Head of caudate nucleus (tissue), 42 donors: ENCODE measurements at regions of chr4 and their contacts with region 1.

Region 1: DNA sequence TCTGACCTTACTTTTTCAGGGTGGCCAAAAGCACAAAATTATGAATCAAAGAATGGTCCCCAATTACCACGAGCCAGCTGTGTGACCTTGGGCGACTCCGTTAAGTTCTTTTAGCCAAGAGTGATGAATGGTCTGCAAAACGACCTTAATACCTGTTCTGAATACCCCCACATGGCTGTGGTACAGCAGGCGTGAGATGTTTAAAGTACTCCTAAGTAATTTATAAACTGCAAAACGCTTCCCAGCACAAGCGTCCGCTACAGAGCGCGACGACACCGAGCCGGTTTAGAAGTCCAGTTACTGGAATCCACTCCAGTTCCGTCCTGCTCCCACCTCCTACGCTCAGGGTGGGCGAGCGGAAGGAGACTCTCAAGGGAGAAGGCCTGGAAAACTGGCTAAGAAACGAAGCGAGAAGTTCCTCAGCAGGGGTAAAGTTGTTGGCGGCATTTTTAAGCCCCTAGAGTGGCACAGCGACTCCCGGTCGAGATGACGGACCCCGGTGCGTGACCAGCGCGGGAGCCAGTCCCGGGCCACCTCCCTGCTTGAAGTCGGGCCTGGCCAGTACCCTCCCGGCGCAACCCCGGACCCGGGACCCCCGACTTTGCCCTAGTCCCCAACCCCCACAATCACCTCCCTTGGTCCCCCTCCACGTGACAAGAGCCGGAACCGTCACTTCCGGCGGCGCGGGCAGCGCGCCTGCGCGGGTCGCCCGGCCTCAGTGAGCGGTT is 683 bp upstream of the BMP2K start:
- DNase-seq: peak; percentile 69 to 95 (median 89)

Region 2: DNA sequence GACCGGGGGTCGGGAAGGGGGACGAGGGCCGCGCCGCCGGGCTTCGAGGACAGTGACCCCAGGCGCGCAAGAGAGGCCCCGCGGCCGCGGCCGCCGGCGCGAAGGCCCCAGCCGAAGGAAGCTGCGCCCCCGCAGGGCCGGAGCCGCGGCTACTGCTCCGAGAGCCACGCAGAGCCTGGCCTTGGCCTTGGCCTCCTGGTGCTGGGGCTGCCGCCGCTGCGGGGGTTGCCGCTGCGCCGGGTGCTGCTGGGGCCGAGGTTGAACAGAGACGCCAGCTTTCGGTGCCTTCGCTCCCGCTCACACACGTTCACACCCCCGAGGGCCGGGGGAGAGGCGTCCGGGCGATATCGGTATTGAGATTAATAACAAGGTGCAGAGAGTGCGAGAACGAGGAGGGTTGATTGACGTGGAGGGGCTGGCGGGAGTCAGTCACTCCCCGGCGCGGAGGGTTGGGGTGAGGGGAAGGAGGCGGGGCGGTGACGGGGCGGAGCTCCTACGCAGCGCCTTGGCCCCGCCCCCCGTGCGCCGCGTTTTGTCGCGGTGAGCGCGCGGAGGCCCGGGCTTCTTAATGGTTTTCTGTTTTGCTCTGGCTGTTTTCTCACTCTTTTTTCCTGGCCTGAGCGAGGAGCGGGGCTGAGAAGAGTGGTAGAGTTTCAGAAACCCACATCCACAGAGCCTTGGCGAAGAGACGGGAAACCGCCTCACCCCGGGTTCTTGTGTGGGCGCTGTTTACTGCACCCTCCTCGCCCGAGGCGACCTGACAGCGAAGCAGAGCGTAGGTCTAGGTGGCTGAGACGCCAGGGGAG is 955.4 kb before region 1 on chr4:
- intact Hi-C with region 1: loop called (anchors 10 kb)
- DNase-seq: peak; percentile 86 to 99 (median 96)

Region 3: GRCh38 chr4:78644744-78645330 is 130.6 kb before region 1 on chr4:
- intact Hi-C with region 1: loop called (anchors 2 kb)
- DNase-seq: peak in 39 of 42 donors; percentile 15 to 78 (median 56)

Region 4: DNA sequence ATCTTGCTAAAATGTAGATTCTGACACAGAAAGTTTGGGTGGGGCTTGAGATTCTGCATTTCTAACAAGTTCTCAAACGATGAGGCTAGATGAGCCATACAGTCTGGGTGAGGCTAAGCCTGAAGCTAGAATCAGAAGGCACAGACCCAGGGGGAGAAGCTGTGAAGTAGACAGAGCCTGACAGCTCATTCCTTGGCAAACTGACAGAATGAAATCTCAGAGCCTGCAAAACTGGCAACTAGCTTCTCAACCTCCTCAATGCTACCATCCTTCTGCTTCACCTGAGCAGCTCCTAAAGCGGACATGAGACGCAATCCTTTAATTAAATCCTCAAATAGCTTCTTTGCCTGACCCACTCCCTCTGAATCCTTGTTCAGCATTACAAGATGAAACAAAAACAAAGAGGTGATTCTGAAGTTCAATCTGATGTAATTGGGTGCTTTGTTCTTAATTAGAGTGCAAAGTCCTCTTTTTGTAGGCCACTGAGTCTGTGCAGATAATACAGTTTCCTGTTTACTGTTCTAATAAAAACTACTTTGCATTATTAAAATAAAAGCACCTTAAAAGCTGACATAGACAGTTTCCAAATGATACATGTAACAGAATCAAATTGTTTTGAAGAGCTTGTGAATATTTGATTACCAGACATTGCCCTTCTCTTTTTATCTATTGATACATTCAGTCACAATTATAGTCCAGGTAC is 70.3 kb before region 1 on chr4:
- intact Hi-C with region 1: loop called (anchors 10 kb)
- DNase-seq: peak in 12 of 42 donors; percentile 8 to 62 (median 30)

Region 5: DNA sequence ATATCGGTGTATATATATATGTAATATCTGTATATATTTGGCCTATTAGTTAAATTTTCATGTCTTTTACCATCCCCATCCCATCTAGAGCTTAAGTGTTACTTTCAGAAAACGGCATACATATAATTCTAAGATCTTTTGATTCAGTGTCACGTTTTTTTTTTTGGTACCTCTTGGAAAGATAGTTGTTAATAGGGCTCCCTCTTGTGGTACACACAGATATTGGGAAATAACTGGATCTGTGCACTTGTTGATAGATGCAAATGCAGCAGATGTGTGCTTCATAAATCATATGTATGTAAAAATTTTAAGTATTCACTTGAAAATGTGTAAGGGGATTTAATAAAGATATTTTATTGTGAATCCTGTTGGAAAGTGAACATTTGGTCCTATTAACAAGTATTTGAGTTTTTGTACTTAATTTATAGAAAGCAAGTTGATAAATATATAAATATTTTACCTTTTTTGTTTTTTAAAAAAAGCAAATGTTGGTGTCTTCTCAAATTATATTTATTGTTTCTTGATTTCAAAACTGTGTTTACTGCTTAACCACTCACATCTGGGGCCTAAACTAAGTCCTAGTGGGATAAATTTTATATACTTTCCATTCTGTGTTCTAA is 89.0 kb after region 1 on chr4:
- intact Hi-C with region 1: loop called (anchors 10 kb)
- DNase-seq: peak in 11 of 42 donors; percentile 11 to 67 (median 33)